Right ventricle myocardium inferior (tissue), 1 donor: ENCODE measurements at regions of chrX and their contacts with region 1.

Region 1: DNA sequence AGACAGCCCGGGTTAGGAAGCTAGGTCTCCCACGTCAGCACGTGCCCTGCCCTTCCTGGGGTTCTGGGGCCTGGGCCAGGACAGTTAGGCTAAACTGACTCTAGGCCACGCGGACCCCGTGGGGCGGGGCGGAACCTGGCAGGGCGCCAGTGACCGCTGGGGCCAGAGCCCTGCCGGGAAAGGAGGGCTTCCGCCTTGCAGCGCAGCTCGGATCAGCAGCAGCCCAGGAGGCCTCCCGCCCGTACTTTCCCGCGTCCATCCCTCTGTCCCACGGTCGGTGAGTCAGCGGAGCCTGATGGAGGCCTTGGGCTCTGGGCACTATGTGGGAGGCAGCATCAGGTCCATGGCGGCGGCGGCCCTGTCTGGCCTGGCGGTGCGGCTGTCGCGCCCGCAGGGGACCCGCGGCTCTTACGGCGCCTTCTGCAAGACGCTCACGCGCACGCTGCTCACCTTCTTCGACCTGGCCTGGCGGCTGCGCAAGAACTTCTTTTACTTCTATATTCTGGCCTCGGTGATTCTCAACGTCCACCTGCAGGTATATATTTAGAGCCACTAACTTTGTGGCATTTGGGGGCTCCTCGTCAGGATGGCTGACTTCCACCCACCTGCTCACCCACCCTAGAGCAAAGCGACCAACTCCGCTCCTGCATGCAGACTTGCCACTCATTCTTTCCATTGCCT is at the start of gene SMIM10:
- DNase-seq: peak; percentile 86
- ATAC-seq: peak; percentile 99
- total RNA-seq, gene SMIM10: 6.4 TPM

Region 2: GRCh38 chrX:134807039-134807731 is 183.8 kb before region 1 on chrX:
- intact Hi-C with region 1: loop called (anchors 10 kb)
- DNase-seq: peak; percentile 92
- ATAC-seq: peak; percentile 93